HEK293 (cell line): ENCODE measurements at regions of chr1 and their contacts with region 1.

Region 1: GRCh38 chr1:119613769-119614720 is 34.0 kb downstream of the ZNF697 start:
- H3K4me3 ChIP-seq: no peak overlapping the region
- H3K27ac ChIP-seq: no peak overlapping the region
- H3K4me1 ChIP-seq: no peaks in the 10 kb centered on the region
- CTCF ChIP-seq: peak; percentile 91

Region 2: GRCh38 chr1:119372490-119373086 is 241.5 kb before region 1 on chr1:
- CTCF ChIA-PET with region 1: interaction called, 13 read pairs
- POLR2A ChIA-PET with region 1: no interaction called
- H3K4me3 ChIP-seq: no peak overlapping the region
- H3K27ac ChIP-seq: no peak overlapping the region
- H3K4me1 ChIP-seq: peaks cover 8% of the 10 kb centered on the region
- CTCF ChIP-seq: peak; percentile 61

Region 3: DNA sequence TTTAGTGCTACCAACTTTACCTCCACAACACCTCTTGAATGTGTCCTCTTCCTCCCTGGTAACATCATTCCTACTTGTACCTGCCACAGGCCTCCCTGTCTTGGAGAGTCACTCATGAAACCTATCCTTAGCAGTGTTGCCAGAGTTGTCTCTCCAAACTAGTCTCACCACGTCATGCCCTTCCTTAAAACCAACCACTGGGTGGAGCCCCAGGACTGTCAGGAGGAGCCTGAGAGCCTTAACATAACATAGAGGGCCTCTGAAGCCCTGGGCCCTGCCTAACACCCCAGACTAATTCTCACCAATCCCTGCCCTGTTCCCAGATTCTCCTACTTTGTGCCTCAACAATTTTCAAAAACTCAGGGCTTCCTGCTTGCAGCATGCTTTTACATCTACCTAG is 31.2 kb before region 1 on chr1:
- CTCF ChIA-PET with region 1: interaction called, 23 read pairs
- POLR2A ChIA-PET with region 1: no interaction called
- H3K4me3 ChIP-seq: no peak overlapping the region
- H3K27ac ChIP-seq: no peak overlapping the region
- H3K4me1 ChIP-seq: no peaks in the 10 kb centered on the region; the same call in 1 of the 2 replicates
- CTCF ChIP-seq: peak; percentile 86

Region 4: GRCh38 chr1:119647734-119648619 is 33.9 kb after region 1 on chr1 and contains the start of gene ZNF697:
- CTCF ChIA-PET with region 1: interaction called, 17 read pairs
- POLR2A ChIA-PET with region 1: interaction called, 13 read pairs
- H3K4me3 ChIP-seq: peak within 1 kb of the TSS; percentile 89
- H3K27ac ChIP-seq: peak within 1 kb of the TSS; percentile 90
- H3K4me1 ChIP-seq: no peaks in the 10 kb centered on the region
- CTCF ChIP-seq: peak; percentile 92

Region 5: DNA sequence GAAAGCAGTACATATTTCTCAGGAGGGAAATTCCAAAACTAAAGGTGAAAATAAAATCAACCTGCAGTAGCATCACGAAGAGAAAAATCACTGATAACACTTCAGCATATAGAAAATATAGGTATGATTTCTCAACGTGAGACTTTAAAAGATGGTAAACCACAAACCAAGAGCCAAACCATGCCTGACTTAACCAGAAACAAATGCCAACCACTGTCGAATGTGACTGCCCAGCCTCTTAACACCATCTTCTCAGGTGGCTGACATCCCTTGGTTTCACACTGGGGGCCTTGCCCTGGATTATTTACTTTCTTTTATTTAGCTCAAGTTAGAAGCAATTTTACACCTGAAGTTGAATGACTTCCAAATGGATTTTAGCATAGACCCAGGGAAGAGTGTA is 144.5 kb after region 1 on chr1:
- CTCF ChIA-PET with region 1: no interaction called
- POLR2A ChIA-PET with region 1: no interaction called
- H3K4me3 ChIP-seq: no peak overlapping the region
- H3K27ac ChIP-seq: no peak overlapping the region
- H3K4me1 ChIP-seq: no peaks in the 10 kb centered on the region
- CTCF ChIP-seq: no peak

Region 6: GRCh38 chr1:119870917-119871596 is 257.0 kb after region 1 on chr1:
- CTCF ChIA-PET with region 1: interaction called, 15 read pairs
- POLR2A ChIA-PET with region 1: no interaction called
- H3K4me3 ChIP-seq: no peak overlapping the region
- H3K27ac ChIP-seq: no peak overlapping the region
- H3K4me1 ChIP-seq: no peaks in the 10 kb centered on the region
- CTCF ChIP-seq: peak; percentile 78